A549 (cell line): ENCODE measurements at regions of chr7 and their contacts with region 1.

Region 1: DNA sequence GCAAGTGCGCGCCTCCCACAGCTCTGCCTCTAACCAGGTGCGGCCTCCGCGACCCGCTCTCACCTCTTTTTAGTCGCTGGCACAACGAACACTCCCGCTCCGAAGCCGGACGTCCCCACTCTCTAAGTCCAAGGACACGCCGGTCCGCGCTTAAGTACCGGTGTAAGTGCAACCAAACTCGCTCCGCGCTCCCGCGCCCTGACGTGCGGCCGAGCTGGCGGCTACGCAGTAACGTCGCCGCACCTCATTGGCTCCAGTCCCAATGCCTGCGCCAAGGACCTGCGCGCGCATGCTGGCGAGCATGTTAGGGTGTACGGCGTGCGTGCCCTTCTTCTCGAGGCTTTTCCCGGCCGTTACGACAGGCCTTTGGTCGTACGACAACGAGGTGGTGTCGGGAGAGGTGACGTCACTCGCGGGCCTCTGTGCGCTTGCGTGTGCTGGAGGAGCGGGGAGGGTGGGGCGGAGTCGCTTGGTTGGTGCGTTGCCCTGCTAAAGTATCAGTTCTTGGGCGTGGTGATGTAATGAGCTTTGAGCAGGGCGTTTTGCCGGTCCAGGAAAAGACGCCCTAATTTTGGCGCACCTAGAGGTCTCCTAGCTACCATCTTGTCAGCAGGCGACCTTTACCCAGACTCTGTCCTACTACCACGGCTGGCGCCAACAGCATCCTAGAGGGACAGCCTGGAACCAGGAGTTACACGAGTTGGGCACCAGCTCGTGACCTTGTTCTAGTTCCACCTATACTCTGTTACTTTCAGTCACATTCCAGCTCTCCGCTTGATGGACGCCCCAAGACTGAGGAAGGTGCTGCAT is at the start of gene CYCS:
- DNase-seq: peak; percentile 89 to 100
- ATAC-seq: peak; percentile 95 to 96
- H3K4me3 ChIP-seq: peak within 1 kb of the TSS; percentile 98
- H3K27ac ChIP-seq: peak within 1 kb of the TSS; percentile 97 to 98
- H3K4me1 ChIP-seq: peaks cover 8% of the 10 kb centered on the region; the same call in 2 of the 3 replicates
- CTCF ChIP-seq: no peak
- EP300 ChIP-seq: no peak
- POLR2A ChIP-seq: peak; percentile 99
- RAD21 ChIP-seq: no peak
- polyA plus RNA-seq, gene CYCS: 196 and 235 TPM in 2 replicates

Region 2: GRCh38 chr7:24965831-24966709 is 159.3 kb before region 1 on chr7:
- CTCF ChIA-PET with region 1: no interaction called
- POLR2A ChIA-PET with region 1: no interaction called
- DNase-seq: no peak
- ATAC-seq: peak in 1 of 2 experiments; percentile 33; a peak in 1 of 6 replicates
- H3K4me3 ChIP-seq: no peak overlapping the region
- H3K27ac ChIP-seq: no peak overlapping the region
- H3K4me1 ChIP-seq: peaks cover 12% of the 10 kb centered on the region
- CTCF ChIP-seq: no peak
- EP300 ChIP-seq: no peak
- POLR2A ChIP-seq: no peak
- RAD21 ChIP-seq: no peak

Region 3: DNA sequence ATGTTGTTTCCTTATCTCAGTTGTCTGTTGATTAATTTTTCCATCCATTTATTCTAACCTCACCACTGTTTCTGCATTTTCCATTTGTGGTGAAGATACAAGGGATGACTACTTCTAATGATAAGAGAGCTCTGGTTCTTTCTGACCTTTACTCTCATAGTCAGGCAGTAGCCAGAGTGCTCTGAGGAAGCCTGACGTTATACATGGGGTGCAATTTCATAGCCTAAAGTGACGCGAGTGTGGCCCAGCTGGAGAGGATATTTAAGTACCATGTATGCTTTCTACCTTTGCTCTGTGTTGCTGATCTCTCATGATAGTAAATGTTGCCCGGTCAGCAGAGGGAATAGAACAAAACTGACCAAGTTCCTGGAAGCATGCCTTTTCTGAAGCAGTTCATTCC is 33.6 kb after region 1 on chr7:
- CTCF ChIA-PET with region 1: interaction called, 10 read pairs
- POLR2A ChIA-PET with region 1: interaction called, 3 read pairs
- DNase-seq: no peak
- ATAC-seq: no peak
- H3K4me3 ChIP-seq: no peak overlapping the region
- H3K27ac ChIP-seq: no peak overlapping the region
- H3K4me1 ChIP-seq: no peaks in the 10 kb centered on the region
- CTCF ChIP-seq: no peak
- EP300 ChIP-seq: no peak
- POLR2A ChIP-seq: no peak
- RAD21 ChIP-seq: no peak

Region 4: DNA sequence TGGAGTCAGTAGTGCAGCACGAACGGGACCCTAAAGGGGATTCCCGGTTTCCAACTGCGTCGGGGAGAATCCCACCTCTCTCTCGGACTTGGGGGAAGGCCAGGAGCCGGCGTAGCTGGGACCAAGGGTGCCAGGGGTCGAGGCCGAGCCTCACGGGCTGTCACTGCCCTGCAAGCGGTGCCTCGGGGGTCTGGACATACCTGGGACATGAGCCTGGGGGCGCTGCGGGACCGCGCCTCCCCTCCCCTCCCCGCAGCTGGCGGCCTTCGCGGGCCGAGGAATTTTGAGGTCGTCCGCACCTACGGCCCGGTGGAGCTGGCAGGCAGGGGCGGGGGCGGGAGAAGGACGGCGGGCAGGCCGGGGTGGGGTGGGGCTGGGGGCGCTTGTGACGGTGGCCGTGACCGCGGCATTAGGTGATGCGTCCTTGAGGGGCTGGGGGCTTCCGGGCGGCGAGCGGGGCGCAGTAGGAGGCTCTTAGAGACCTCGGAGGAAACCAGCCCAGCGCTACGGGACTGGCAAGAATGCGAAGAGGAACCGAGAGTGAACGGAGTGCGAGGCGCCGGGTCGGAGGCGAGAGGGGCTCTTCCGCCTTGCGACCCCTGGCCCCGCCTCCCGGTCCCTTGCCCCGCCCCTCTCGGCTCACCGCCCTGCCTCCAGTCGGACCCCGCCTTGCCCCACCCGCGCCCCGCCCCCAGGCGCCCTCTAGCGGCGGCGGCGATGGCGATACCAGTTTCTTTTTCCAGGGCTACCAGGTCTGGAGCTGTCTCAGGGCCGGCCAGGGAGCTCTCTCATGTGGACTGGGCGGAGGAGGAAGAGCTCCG is 54.6 kb after region 1 on chr7:
- CTCF ChIA-PET with region 1: interaction called, 7 read pairs
- POLR2A ChIA-PET with region 1: interaction called, 11 read pairs
- DNase-seq: peak; percentile 85 to 88
- ATAC-seq: peak; percentile 93 to 99
- H3K4me3 ChIP-seq: peak overlapping the region; percentile 80
- H3K27ac ChIP-seq: peak overlapping the region; percentile 84 to 95
- H3K4me1 ChIP-seq: 0 out of 3 replicates have a peak, but pooled peaks cover 4% of the 10 kb centered on the region
- CTCF ChIP-seq: peak; percentile 85
- EP300 ChIP-seq: no peak
- POLR2A ChIP-seq: peak; percentile 81
- RAD21 ChIP-seq: no peak; a peak in 1 of 5 replicates

Region 5: DNA sequence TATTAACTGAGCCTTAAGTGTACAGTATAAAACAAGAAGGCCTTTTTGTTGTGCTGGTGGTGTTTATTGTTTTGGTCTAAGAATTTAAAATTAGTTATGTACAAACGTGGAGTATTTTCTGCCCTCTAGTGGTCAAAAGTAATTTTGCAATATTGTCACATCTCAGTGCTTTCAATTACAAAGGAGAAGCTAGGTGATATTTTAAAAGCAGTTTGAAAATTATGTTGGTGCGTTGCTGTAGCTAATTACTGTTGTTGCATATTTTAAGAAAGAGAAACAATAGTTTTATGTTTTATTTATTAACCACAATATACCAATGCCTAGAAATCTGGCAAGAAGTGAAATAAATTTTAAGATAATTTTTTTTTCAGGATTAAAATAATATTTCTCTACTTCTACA is 91.5 kb after region 1 on chr7:
- CTCF ChIA-PET with region 1: no interaction called
- POLR2A ChIA-PET with region 1: no interaction called
- DNase-seq: peak in 1 of 2 experiments; percentile 52
- ATAC-seq: peak in 1 of 2 experiments; percentile 61; a peak in 2 of 6 replicates
- H3K4me3 ChIP-seq: no peak overlapping the region
- H3K27ac ChIP-seq: no peak overlapping the region
- H3K4me1 ChIP-seq: no peaks in the 10 kb centered on the region
- CTCF ChIP-seq: peak; percentile 72
- EP300 ChIP-seq: no peak
- POLR2A ChIP-seq: no peak
- RAD21 ChIP-seq: peak in 1 of 2 experiments; percentile 27; a peak in 1 of 5 replicates

Region 6: DNA sequence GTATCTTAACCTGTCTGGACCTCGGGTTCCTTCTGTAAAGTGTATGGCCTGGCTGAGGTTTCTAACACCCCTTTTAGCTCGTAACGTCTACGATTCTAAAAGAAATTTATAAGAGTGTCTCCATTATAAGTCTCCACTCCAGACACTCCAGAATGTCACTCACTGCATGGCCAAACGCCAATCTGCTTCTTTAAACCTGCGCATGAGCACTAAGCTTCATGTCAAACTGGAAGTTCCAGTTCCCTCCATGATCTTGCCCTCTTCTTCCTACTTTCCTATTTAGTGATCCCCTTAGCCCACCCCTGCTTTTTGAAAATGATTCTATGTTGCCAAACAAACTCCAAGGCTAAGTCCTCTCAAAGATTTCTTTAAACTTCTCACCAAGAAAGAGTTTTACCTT is 344.3 kb after region 1 on chr7:
- CTCF ChIA-PET with region 1: no interaction called
- POLR2A ChIA-PET with region 1: no interaction called
- DNase-seq: no peak
- ATAC-seq: no peak
- H3K4me3 ChIP-seq: no peak overlapping the region
- H3K27ac ChIP-seq: no peak overlapping the region
- H3K4me1 ChIP-seq: no peaks in the 10 kb centered on the region
- CTCF ChIP-seq: no peak
- EP300 ChIP-seq: no peak
- POLR2A ChIP-seq: no peak
- RAD21 ChIP-seq: no peak